ENCODE measurements at regions of chr3 and their contacts with region 1.

Region 1: GRCh38 chr3:149717391-149718056 is 34.8 kb downstream of the COMMD2 start:
- DNase-seq: peak in 4 of 9 donors; percentile 3 to 12 (median 8)
- ATAC-seq: no peak
- H3K4me3 ChIP-seq: no peak overlapping the region
- H3K4me3 Mint-ChIP-seq: no peak overlapping the region
- H3K27ac ChIP-seq: no peak overlapping the region
- H3K27ac Mint-ChIP-seq: no peak overlapping the region
- H3K4me1 ChIP-seq: no peaks in the 10 kb centered on the region
- H3K4me1 Mint-ChIP-seq: no peaks in the 10 kb centered on the region
- H3K27me3 ChIP-seq: no peaks in the 10 kb centered on the region
- H3K27me3 Mint-ChIP-seq: peaks cover 0 to 13% (median 0%) of the 10 kb centered on the region in 5 donors

Region 2: GRCh38 chr3:149512209-149512782 is 205.2 kb before region 1 on chr3:
- CTCF ChIA-PET with region 1: no interaction called
- POLR2A ChIA-PET with region 1: no interaction called
- intact Hi-C with region 1: loop called in 1 of 2 experiments (anchors 1 kb)
- DNase-seq: peak in 1 of 9 donors; percentile 25
- ATAC-seq: peak; percentile 52
- H3K4me3 ChIP-seq: no peak overlapping the region
- H3K4me3 Mint-ChIP-seq: peak overlapping the region in 1 of 10 donors; percentile 37
- H3K27ac ChIP-seq: no peak overlapping the region
- H3K27ac Mint-ChIP-seq: no peak overlapping the region
- H3K4me1 ChIP-seq: no peaks in the 10 kb centered on the region
- H3K4me1 Mint-ChIP-seq: peaks cover 4 to 17% (median 9%) of the 10 kb centered on the region in 7 donors
- H3K27me3 ChIP-seq: no peaks in the 10 kb centered on the region
- H3K27me3 Mint-ChIP-seq: peaks cover 16 to 30% (median 21%) of the 10 kb centered on the region in 5 donors

Region 3: GRCh38 chr3:149527531-149528339 is 189.8 kb before region 1 on chr3:
- CTCF ChIA-PET with region 1: no interaction called
- POLR2A ChIA-PET with region 1: no interaction called
- intact Hi-C with region 1: loop called in 1 of 2 experiments (anchors 1 kb)
- DNase-seq: no peak
- ATAC-seq: no peak
- H3K4me3 ChIP-seq: no peak overlapping the region
- H3K4me3 Mint-ChIP-seq: no peak overlapping the region
- H3K27ac ChIP-seq: no peak overlapping the region
- H3K27ac Mint-ChIP-seq: no peak overlapping the region
- H3K4me1 ChIP-seq: no peaks in the 10 kb centered on the region
- H3K4me1 Mint-ChIP-seq: peaks cover 0 to 4% (median 0%) of the 10 kb centered on the region in 7 donors
- H3K27me3 ChIP-seq: peaks cover 0 to 2% of the 10 kb centered on the region in 2 donors
- H3K27me3 Mint-ChIP-seq: peaks cover 13 to 24% (median 15%) of the 10 kb centered on the region in 5 donors

Region 4: DNA sequence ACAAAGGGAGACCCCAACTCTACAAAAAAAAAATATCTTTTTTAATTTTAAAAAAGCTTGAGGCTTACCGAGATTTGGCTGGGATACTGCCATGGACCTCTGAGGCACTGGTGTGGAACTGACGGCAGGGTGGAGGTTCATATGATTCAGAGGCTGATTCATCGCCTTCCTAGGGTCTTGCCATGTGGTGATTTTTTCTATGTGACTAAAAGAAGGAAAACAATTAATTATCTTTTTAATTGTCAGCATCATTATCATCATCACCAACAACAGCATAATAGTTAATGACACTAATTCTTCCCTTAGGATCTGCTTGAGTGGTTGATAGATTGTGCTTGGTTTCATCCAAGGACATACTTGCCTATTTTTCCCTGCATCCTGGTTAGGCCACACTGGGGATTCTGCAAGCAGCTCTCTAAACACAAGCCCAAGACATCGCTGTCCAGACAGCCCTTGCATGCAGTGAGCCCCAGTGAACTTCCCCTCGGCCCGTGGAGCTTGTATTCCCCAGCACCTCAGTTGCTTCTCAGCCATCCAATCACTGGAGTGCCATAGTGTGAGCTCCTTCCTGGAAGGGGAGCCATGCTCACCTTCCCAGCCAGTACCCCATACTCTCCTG is 144.6 kb before region 1 on chr3:
- CTCF ChIA-PET with region 1: no interaction called
- POLR2A ChIA-PET with region 1: no interaction called
- intact Hi-C with region 1: loop called in 1 of 2 experiments (anchors 1 kb)
- DNase-seq: no peak
- ATAC-seq: no peak
- H3K4me3 ChIP-seq: no peak overlapping the region
- H3K4me3 Mint-ChIP-seq: no peak overlapping the region
- H3K27ac ChIP-seq: no peak overlapping the region
- H3K27ac Mint-ChIP-seq: peak overlapping the region in 1 of 9 donors; percentile 38
- H3K4me1 ChIP-seq: no peaks in the 10 kb centered on the region
- H3K4me1 Mint-ChIP-seq: peaks cover 0 to 27% (median 0%) of the 10 kb centered on the region in 7 donors
- H3K27me3 ChIP-seq: no peaks in the 10 kb centered on the region
- H3K27me3 Mint-ChIP-seq: peaks cover 0 to 6% (median 0%) of the 10 kb centered on the region in 5 donors

Region 5: DNA sequence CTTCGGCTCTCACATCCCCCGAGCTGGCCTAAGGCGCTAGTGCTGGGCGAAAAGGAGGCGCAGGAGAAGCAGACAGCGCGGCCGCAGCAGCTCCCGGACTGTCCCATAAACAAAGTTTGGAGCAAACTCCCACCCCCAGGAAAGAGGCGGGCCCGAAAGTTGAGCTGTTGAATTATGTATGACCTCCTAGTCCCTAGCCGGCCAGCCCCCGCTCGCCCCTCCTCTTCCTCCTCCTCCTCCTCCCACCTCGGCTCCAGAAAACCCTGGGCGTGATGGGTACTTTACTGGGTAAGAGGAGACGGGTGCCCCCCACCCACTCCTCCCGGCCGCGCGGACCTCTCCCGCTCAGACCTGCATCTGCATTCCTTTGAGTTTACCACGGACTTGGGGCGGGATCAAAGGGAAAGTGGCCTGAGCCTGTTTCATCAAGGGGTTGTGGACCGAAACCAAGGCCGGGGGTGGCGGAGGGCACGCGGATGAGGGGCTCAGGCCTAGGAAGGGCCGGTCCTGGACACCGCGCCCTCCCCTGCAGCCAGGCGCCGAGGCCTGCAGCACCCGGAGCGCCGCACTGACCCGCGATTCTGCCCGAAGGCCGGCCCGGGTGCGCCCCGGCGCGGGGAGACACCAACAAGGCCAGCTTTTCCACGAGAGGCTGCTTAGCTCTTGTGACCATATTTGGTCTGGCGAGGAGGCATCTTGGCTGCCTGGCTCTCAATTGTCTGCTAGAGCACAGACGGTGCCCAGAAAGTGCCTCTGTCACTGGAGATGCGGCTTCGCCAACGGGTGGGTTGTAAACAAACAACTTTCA is 59.4 kb before region 1 on chr3 and contains the start of gene WWTR1:
- CTCF ChIA-PET with region 1: no interaction called
- POLR2A ChIA-PET with region 1: no interaction called
- intact Hi-C with region 1: loop called in 1 of 2 experiments (anchors 5 kb)
- DNase-seq: peak in 1 of 9 donors; percentile 55
- ATAC-seq: peak; percentile 54
- H3K4me3 ChIP-seq: peak within 1 kb of the TSS; percentile 47
- H3K4me3 Mint-ChIP-seq: peak within 1 kb of the TSS; percentile 63 to 87 (median 80)
- H3K27ac ChIP-seq: no peak within 1 kb of the TSS
- H3K27ac Mint-ChIP-seq: peak within 1 kb of the TSS in 2 of 9 donors; percentile 12 to 14
- H3K4me1 ChIP-seq: peaks cover 0 to 4% of the 10 kb centered on the region in 2 donors
- H3K4me1 Mint-ChIP-seq: peaks cover 0 to 21% (median 10%) of the 10 kb centered on the region in 7 donors
- H3K27me3 ChIP-seq: no peaks in the 10 kb centered on the region
- H3K27me3 Mint-ChIP-seq: peaks cover 60 to 81% (median 69%) of the 10 kb centered on the region in 5 donors
- total RNA-seq, gene WWTR1: 0.19 to 0.56 (median 0.34) TPM